ENCODE measurements at regions of chr11 and their contacts with region 1.

Region 1: GRCh38 chr11:69642913-69643632 is 2.1 kb downstream of the CCND1 start:
- DNase-seq: peak; percentile 88
- ATAC-seq: peak; percentile 76

Region 2: DNA sequence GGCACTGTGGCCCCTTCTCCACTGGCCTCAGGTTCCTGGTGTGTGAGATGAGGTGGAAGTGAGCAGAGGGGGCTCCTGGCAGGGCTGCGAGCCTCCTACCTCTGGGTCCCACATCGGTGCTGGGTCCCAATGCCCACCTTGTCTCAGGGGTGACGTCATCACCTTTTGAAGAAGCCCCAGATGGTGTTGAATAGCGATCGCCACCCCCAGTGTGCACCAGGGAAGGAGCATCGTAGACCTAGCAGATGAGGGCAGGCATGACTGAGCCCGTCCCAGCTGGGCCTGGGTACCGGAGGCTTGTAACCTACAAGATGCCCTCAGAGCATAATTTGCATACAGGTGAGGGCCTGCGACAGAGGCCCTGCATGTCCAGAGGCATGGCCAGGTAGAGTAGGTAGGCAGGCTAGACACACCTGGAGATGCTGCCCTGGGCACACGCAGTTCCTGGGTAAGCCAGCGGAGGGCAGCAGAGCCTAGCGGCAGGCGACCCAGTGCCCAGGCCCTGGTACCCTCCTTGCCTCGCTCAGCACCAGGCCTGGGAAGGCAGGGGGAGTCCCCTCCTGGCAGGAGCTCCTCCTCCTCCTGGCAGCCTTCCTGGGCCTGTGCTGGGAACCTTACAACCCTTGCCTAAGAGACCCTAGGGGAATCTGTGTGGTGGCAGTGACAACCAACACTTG is 541.8 kb before region 1 on chr11:
- intact Hi-C with region 1: loop called (anchors 2 kb)
- DNase-seq: peak; percentile 85
- ATAC-seq: peak; percentile 85

Region 3: GRCh38 chr11:69296890-69297786 is 345.9 kb before region 1 on chr11:
- intact Hi-C with region 1: loop called (anchors 2 kb)
- DNase-seq: peak; percentile 97
- ATAC-seq: peak; percentile 88

Region 4: GRCh38 chr11:69443138-69443967 is 199.7 kb before region 1 on chr11:
- intact Hi-C with region 1: loop called (anchors 10 kb)
- DNase-seq: peak; percentile 95
- ATAC-seq: peak; percentile 96

Region 5: DNA sequence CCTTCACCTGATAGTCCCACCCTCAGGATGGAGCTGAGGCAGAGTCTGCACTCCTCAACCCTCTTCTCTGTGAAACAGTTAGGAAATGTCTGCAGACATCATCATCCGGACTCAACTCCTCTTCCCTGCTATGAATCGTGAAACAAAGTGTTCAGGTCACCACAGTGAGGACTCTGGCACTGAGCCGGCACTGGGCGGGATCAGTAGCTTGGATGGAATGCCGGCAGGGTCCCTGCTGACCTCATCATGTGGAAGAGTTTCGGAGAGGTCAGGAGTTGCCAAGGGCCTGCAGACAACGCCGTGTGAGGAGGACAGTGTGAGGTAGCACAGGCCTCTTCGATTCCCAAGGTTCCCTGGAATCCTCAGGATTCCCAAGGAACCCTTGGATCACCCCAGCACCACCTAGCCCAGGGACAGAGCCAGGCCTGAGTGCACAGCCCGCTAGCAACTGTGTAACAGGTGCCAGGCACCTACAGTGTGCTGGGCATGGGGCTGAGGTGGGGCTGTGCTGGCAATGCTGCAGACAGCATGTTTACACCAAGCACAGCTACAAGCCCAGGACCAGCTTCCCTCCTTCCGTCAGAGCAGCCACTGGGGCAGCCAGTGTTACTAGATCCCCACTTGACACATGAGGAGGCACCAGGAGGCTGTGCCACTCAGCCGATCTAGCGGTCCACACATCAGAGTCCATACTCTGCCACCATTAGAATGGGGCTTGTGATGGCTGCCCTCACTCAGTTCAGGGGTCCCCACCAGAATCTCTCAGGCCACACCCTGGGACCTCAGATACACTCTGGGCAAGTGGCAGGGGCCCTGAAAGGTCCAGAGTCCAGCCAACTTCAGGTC is 162.3 kb before region 1 on chr11:
- intact Hi-C with region 1: loop called (anchors 5 kb)
- DNase-seq: peak; percentile 84
- ATAC-seq: peak; percentile 76

Region 6: GRCh38 chr11:69711822-69712801 is 69.0 kb after region 1 on chr11:
- intact Hi-C with region 1: no loop called
- DNase-seq: no peak
- ATAC-seq: no peak